Activated T-helper 2 cell treated with anti-CD3 and anti-CD28 coated beads, Interferon-gamma antibody, Interleukin-2, Interleukin-4, amounts not matched to agents 10 μg/mL and 5 μg/mL and 100 μg/mL, durations not matched to agents 14 hours and 24 hours and 36 hours (primary cell): ENCODE measurements at regions of chr4 and their contacts with region 1.

Region 1: GRCh38 chr4:113823291-113823659 is 61.7 kb upstream of the CAMK2D start:
- DNase-seq: no peak
- H3K4me3 Mint-ChIP-seq: no peak overlapping the region
- H3K27ac Mint-ChIP-seq: no peak overlapping the region
- H3K4me1 Mint-ChIP-seq: peaks cover 42% of the 10 kb centered on the region
- H3K27me3 Mint-ChIP-seq: peaks cover 6% of the 10 kb centered on the region

Region 2: GRCh38 chr4:113146876-113147358 is 676.4 kb before region 1 on chr4:
- intact Hi-C with region 1: loop called (anchors 2 kb)
- DNase-seq: no peak
- H3K4me3 Mint-ChIP-seq: peak overlapping the region; percentile 75
- H3K27ac Mint-ChIP-seq: peak overlapping the region; percentile 89
- H3K4me1 Mint-ChIP-seq: peaks cover 26% of the 10 kb centered on the region
- H3K27me3 Mint-ChIP-seq: peaks cover 6% of the 10 kb centered on the region

Region 3: DNA sequence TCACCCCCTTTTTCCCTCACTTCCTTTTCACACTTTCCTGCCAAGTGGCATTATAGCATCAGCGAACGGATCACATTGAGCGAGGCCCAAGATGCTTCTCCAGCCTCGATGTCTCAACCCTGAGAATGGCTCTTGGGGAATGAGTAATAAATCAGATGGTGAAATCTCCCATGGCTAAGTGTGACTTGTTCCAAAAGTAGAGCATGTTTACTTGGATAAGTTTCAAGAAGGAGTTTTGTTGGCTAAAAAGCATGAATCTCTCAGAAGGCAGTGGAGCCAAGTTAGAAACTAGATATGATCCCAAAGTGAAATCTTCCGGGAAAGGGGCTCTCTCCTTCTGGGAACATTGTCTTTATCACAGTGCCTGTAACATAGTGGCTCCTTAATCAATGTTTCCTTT is 378.0 kb before region 1 on chr4:
- intact Hi-C with region 1: loop called (anchors 2 kb)
- DNase-seq: no peak
- H3K4me3 Mint-ChIP-seq: no peak overlapping the region
- H3K27ac Mint-ChIP-seq: peak overlapping the region; percentile 80
- H3K4me1 Mint-ChIP-seq: peaks cover 25% of the 10 kb centered on the region
- H3K27me3 Mint-ChIP-seq: no peaks in the 10 kb centered on the region

Region 4: DNA sequence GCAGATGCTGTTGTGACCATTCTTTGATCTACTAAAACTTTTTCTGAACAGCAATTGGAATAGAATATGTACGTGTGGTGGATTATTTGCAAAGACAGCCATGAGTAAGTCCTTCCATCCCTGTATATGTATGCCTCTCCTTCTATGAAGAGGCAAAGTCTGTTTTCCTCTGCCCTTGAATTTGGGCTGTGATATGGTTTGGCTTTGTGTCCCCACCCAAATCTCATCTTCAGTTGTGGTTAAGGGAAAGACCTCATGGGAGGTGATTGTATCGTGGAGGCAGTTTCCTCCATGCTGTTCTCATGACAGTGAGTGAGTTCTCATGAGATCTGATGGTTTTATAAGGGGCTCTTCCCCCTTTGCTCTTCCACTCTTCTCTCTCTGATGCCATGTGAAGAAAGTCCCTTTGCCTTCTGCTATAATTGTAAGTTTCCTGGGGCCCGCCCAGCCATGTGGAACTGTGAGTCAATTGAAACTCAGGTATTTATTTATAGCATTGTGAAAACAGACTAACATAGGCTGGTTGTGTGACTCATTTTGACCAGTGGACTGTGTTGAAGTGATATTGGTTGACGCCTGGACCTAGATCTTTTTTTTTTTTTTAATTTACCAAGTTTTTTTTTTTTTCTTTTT is 46.6 kb after region 1 on chr4:
- intact Hi-C with region 1: loop called (anchors 5 kb)
- DNase-seq: no peak
- H3K4me3 Mint-ChIP-seq: no peak overlapping the region
- H3K27ac Mint-ChIP-seq: peak overlapping the region; percentile 85
- H3K4me1 Mint-ChIP-seq: peaks cover 5% of the 10 kb centered on the region
- H3K27me3 Mint-ChIP-seq: no peaks in the 10 kb centered on the region